Activated B cell treated with CpG ODN at 0.5 μM for 24 hours (primary cell): ENCODE measurements at regions of chr4 and their contacts with region 1.

Region 1: GRCh38 chr4:173013232-173013930 is 155.2 kb upstream of the GALNT7 start:
- DNase-seq: no peak
- ATAC-seq: peak; percentile 61
- H3K4me3 Mint-ChIP-seq: no peak overlapping the region
- H3K27ac Mint-ChIP-seq: no peak overlapping the region
- H3K4me1 Mint-ChIP-seq: no peaks in the 10 kb centered on the region
- H3K27me3 Mint-ChIP-seq: peaks cover 1% of the 10 kb centered on the region
- CTCF ChIP-seq: no peak

Region 2: GRCh38 chr4:173002830-173003561 is 10.4 kb before region 1 on chr4:
- CTCF ChIA-PET with region 1: interaction called, 10 read pairs
- POLR2A ChIA-PET with region 1: no interaction called
- intact Hi-C with region 1: no loop called
- DNase-seq: no peak
- ATAC-seq: no peak
- H3K4me3 Mint-ChIP-seq: no peak overlapping the region
- H3K27ac Mint-ChIP-seq: no peak overlapping the region
- H3K4me1 Mint-ChIP-seq: no peaks in the 10 kb centered on the region
- H3K27me3 Mint-ChIP-seq: no peaks in the 10 kb centered on the region
- CTCF ChIP-seq: no peak

Region 3: DNA sequence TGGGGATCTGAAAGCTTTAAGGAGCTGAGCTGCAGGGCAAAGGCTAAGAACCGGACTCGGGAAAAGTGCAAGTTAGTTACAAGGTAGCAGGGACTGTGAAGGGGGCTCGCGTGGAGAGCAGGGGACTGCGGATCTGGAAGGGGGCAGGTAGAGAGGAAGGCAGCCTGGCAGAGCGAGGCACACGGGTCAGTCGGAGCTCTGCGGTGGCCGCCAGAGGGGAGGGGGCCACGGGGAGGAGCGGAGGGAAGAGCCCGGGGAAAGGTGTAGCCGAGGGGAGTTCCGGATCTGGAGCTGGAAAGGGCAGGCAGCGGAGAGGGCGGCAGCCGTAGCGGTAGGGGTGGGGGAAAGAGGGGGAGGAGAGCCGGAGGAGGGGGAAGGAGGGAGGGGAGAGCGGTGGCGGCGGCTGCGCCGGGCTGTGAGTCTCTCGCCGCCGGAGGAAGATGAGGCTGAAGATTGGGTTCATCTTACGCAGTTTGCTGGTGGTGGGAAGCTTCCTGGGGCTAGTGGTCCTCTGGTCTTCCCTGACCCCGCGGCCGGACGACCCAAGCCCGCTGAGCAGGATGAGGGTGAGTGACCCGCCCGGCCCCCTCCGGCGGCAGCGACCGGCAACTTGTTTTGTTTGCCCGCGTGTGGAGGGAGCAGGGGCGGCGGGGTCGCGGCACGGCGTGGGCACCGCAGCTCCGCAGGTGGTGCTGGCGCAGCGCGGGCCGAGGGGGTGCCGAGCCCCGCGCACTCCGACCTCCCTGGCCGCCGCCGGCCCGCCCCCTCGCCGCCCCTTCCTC is 155.2 kb after region 1 on chr4 and contains the start of gene GALNT7:
- CTCF ChIA-PET with region 1: interaction called, 10 read pairs
- POLR2A ChIA-PET with region 1: no interaction called
- intact Hi-C with region 1: no loop called
- DNase-seq: peak; percentile 46
- ATAC-seq: peak; percentile 45
- H3K4me3 Mint-ChIP-seq: peak within 1 kb of the TSS; percentile 96
- H3K27ac Mint-ChIP-seq: peak within 1 kb of the TSS; percentile 85
- H3K4me1 Mint-ChIP-seq: peaks cover 39% of the 10 kb centered on the region
- H3K27me3 Mint-ChIP-seq: no peaks in the 10 kb centered on the region
- CTCF ChIP-seq: no peak
- total RNA-seq, gene GALNT7: 15.3 and 16.9 TPM in 2 replicates

Region 4: DNA sequence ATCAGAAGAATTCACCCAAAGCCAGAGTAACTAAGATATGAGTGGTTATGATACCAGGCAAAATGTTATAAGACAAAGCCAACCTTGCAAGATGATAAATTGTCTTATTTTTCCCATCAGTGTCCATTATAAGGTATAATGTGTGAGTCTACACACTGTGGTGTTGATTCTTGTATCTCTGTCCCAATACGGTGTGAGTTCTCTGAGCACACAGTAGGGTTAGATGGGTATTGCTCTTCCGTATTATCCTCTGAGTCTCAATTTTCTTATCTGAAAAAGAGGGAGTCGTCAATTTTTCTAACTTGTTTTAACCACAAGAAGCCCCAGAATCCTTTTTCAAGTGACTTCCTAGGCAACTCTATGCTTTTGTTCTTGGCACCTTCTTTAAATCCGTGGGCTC is 250.9 kb after region 1 on chr4:
- CTCF ChIA-PET with region 1: interaction called, 14 read pairs
- POLR2A ChIA-PET with region 1: no interaction called
- intact Hi-C with region 1: no loop called
- DNase-seq: no peak
- ATAC-seq: no peak
- H3K4me3 Mint-ChIP-seq: peak overlapping the region; percentile 46
- H3K27ac Mint-ChIP-seq: peak overlapping the region; percentile 61
- H3K4me1 Mint-ChIP-seq: peaks cover 34% of the 10 kb centered on the region
- H3K27me3 Mint-ChIP-seq: no peaks in the 10 kb centered on the region
- CTCF ChIP-seq: no peak

Region 5: GRCh38 chr4:173301518-173302201 is 288.3 kb after region 1 on chr4:
- CTCF ChIA-PET with region 1: interaction called, 46 read pairs
- POLR2A ChIA-PET with region 1: no interaction called
- intact Hi-C with region 1: loop called (anchors 1 kb)
- DNase-seq: no peak
- ATAC-seq: peak; percentile 40
- H3K4me3 Mint-ChIP-seq: no peak overlapping the region
- H3K27ac Mint-ChIP-seq: no peak overlapping the region
- H3K4me1 Mint-ChIP-seq: peaks cover 7% of the 10 kb centered on the region
- H3K27me3 Mint-ChIP-seq: no peaks in the 10 kb centered on the region
- CTCF ChIP-seq: no peak

Region 6: DNA sequence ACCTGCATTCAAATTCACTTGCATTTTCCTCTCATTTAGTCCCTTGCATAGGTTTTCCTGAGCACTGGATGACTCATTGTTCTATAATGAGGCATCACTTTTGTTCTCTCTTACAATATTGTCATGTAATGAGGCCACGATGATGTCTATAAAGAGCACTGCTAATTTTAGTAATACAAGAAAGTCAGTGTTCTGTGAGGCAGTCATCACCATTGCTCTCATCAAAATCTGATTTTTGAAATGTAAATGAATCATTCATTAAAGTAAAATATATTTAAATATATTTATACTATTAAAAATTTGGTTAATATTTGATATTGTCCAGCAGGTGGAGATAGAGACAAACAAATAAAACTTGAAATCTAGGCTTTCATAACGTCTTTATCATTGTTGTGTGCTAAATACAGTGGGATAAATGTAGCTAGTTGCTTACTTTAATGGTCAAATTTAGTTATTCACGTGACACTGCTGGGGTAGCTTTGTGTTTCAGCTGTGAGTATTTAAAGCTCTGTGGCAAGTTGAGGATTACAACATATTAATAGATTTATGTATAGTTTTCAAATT is 305.3 kb after region 1 on chr4:
- CTCF ChIA-PET with region 1: interaction called, 3 read pairs
- POLR2A ChIA-PET with region 1: no interaction called
- intact Hi-C with region 1: loop called (anchors 5 kb)
- DNase-seq: no peak
- ATAC-seq: no peak
- H3K4me3 Mint-ChIP-seq: no peak overlapping the region
- H3K27ac Mint-ChIP-seq: no peak overlapping the region
- H3K4me1 Mint-ChIP-seq: no peaks in the 10 kb centered on the region
- H3K27me3 Mint-ChIP-seq: no peaks in the 10 kb centered on the region
- CTCF ChIP-seq: peak; percentile 48

Region 7: DNA sequence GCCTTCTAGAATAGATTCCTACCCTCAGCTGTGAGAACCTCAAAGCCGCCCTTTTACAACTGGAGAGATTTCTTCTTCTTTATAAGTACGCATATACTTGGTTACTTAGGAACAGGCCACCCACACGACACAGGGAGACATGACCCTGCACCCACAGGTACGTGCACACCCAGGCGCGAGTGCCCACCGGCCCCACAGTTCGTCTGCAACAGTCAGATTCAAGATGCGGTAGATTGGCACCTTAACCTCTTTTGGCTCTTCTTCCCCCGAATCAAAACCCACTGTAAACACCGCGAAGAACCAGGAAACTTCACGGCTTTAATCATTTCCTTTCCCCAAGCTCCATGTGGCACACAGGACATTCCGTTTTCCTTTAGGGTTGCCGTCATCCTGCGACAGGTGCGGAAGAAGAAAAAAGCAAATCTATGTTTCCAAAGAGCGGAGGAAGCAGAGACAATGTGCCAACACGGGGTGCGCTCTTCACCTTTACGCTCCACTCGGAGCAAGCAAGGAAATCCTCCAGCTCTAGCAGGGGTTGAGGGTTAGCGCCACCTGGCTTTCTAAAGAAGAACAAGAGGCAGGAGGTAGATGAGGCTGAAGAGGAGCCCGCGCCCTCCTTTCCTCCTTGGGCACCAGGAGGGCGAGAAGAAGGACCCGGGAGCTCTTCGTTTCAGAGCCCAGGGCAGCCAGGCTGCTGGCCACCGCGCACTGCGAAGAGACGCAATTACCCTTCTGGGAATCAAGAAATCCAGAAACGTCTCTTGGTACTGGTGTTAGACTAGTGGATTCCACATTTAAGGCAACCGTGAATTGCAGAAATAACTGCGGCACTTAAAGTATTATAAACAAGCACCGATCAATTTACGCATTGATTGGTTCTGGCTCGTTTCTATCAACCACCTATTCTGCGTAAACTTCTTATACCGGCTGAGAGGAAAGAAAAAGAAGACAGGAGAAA is 480.9 kb after region 1 on chr4:
- CTCF ChIA-PET with region 1: interaction called, 5 read pairs
- POLR2A ChIA-PET with region 1: no interaction called
- intact Hi-C with region 1: loop called (anchors 1 kb)
- DNase-seq: no peak
- ATAC-seq: peak; percentile 86
- H3K4me3 Mint-ChIP-seq: peak overlapping the region; percentile 83
- H3K27ac Mint-ChIP-seq: peak overlapping the region; percentile 37
- H3K4me1 Mint-ChIP-seq: peaks cover 23% of the 10 kb centered on the region
- H3K27me3 Mint-ChIP-seq: peaks cover 15% of the 10 kb centered on the region
- CTCF ChIP-seq: no peak